AG04449 (cell line): ENCODE measurements at regions of chr16 and their contacts with region 1.

Region 1: GRCh38 chr16:67461600-67462592 is 19.1 kb downstream of the ATP6V0D1 start:
- DNase-seq: no peak
- H3K4me3 ChIP-seq: no peak overlapping the region
- CTCF ChIP-seq: no peak

Region 2: DNA sequence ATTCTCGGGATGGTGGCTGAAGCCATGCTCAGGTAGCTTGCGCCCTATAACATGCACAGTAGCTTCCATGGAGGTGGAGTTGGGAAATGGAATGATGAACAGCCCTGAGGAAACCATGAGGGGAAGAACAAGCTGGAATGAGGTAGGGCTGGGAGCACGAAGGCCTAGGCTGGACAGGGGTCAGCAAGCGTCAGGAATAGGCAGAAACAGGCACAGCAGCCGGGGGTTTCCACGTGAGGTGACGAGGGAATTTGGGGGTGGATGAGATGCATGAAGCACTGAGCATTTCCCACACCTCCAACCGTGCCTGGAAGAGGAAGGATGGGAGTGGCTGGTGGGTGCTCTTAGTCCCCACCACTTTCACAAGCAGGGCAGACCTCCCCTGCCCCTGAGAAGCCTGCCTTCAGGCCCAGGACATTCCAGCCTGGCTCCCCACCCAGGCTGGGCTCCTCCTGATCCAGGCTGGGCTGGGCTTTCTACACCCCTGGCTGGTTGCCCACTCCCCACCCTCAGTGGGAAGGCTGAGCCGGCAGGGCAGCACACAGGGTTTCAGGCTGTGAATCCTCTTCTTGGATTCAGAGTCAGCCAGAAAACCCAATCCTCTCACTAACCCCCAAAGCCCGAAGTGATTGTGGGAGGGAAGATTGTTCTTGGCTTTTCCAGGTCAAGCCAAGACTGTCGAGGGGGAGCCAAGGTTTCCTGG is 160.7 kb before region 1 on chr16:
- CTCF ChIA-PET with region 1: no interaction called
- POLR2A ChIA-PET with region 1: no interaction called
- DNase-seq: no peak
- H3K4me3 ChIP-seq: no peak overlapping the region
- CTCF ChIP-seq: no peak

Region 3: GRCh38 chr16:67349172-67349571 is 112.7 kb before region 1 on chr16:
- CTCF ChIA-PET with region 1: interaction called, 21 read pairs
- POLR2A ChIA-PET with region 1: no interaction called
- DNase-seq: no peak
- H3K4me3 ChIP-seq: no peak overlapping the region
- CTCF ChIP-seq: no peak

Region 4: GRCh38 chr16:67447508-67448076 is 14.3 kb before region 1 on chr16:
- CTCF ChIA-PET with region 1: interaction called, 53 read pairs
- POLR2A ChIA-PET with region 1: interaction called, 3 read pairs
- DNase-seq: no peak
- H3K4me3 ChIP-seq: no peak overlapping the region
- CTCF ChIP-seq: peak; percentile 34